Activated CD4-positive, alpha-beta memory T cell treated with anti-CD3 and anti-CD28 coated beads for 36 hours (primary cell): ENCODE measurements at regions of chr1 and their contacts with region 1.

Region 1: GRCh38 chr1:109643385-109644230 is 12.3 kb upstream of the GSTM4 start:
- DNase-seq: peak; percentile 93
- H3K4me3 Mint-ChIP-seq: no peak overlapping the region
- H3K27ac Mint-ChIP-seq: no peak overlapping the region
- H3K4me1 Mint-ChIP-seq: peaks cover 3% of the 10 kb centered on the region
- H3K27me3 Mint-ChIP-seq: no peaks in the 10 kb centered on the region

Region 2: DNA sequence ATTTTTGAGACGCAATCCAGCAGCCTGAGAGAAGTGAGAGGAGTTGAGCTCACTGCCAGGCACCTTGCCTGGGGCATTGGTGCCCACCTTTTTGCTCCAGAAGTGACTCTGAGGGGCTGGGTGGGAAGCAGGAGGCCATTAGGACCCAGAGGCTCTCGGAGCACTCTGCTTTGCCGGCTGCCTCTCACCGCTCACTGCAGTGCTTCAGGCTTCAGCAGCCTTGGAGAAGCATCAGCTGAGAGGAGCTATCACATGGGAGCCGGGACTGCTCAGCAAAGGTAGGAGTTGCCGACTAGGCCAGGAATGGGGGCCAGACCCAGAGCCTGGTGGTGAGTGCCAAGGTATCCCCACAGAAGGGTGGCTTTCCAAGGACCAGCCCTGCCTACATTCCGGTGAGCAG is 103.9 kb before region 1 on chr1 and contains the start of gene GPR61:
- CTCF ChIA-PET with region 1: interaction called, 130 read pairs
- POLR2A ChIA-PET with region 1: no interaction called
- intact Hi-C with region 1: no loop called
- DNase-seq: no peak
- H3K4me3 Mint-ChIP-seq: no peak within 1 kb of the TSS
- H3K27ac Mint-ChIP-seq: no peak within 1 kb of the TSS
- H3K4me1 Mint-ChIP-seq: no peaks in the 10 kb centered on the region
- H3K27me3 Mint-ChIP-seq: no peaks in the 10 kb centered on the region
- total RNA-seq, gene GPR61: 0.15 TPM in 1 of 2 experiments, not detected in the other

Region 3: DNA sequence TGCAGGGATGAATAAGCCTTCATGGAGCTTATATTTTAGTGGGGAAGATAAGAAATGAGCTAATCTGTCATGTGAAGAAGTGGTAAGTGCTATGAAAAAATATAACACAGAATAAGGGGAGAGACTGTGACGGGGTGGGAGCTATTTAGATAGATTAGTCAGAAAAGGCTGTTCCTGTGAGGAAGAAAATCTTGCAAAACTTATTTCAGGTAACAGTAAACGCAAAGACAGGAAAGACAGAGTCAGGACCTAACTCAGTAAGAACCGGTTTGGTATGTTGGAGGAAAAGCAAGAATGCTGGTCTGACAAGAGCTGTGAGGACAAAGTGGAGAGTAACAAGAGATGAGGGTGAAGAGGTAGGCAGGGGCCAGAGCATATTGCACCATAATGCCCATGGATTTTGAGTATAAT is 73.2 kb before region 1 on chr1:
- CTCF ChIA-PET with region 1: interaction called, 12 read pairs
- POLR2A ChIA-PET with region 1: no interaction called
- intact Hi-C with region 1: no loop called
- DNase-seq: no peak
- H3K4me3 Mint-ChIP-seq: no peak overlapping the region
- H3K27ac Mint-ChIP-seq: no peak overlapping the region
- H3K4me1 Mint-ChIP-seq: peaks cover 34% of the 10 kb centered on the region
- H3K27me3 Mint-ChIP-seq: no peaks in the 10 kb centered on the region

Region 4: DNA sequence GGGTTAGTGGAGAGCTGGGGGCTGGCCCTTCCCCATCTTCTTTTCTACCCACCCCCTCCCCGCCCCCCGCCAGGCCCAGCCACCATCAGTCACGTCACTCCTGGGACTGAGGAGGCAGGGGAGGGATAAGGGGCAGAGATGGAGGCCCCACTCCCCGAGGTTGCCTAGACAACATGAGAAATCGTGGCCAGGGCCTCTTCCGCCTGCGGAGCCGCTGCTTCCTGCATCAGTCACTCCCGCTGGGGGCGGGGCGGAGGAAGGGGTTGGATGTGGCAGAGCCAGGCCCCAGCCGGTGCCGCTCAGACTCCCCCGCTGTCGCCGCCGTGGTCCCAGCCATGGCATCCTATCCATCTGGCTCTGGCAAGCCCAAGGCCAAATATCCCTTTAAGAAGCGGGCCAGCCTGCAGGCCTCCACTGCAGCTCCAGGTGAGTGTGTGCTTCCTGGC is 22.7 kb before region 1 on chr1:
- CTCF ChIA-PET with region 1: interaction called, 29 read pairs
- POLR2A ChIA-PET with region 1: no interaction called
- intact Hi-C with region 1: no loop called
- DNase-seq: peak; percentile 98
- H3K4me3 Mint-ChIP-seq: peak overlapping the region; percentile 98
- H3K27ac Mint-ChIP-seq: peak overlapping the region; percentile 96
- H3K4me1 Mint-ChIP-seq: peaks cover 58% of the 10 kb centered on the region
- H3K27me3 Mint-ChIP-seq: no peaks in the 10 kb centered on the region

Region 5: DNA sequence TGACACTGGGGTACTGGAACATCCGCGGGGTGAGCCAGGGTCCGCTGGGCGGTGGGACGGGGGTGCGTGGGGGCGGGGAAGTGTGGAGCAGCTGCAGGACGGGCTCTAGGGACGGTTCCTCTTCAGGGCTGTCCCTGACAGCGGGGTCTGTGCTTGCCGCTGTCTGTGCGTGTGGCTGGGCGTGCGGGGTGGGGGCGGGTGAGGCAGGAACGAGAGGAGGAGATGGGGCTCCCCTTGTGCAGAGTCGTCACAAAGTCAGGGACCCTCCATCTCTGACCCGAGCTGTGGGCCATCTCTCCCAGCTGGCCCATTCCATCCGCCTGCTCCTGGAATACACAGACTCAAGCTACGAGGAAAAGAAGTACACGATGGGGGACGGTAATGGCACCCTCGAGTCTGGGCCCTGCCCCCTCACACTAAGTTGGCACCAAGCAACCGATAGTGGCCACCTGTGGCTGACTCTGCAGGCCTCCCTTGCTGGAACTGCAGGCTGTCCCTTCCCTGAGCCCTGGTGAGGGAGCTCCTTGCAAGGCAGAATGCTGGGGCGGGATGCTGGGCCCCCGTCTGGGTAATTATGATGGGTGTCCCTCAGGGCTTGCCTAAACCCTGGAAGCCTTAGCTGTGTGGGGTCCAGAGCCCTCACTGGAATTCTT is 24.6 kb after region 1 on chr1:
- CTCF ChIA-PET with region 1: interaction called, 16 read pairs
- POLR2A ChIA-PET with region 1: no interaction called
- intact Hi-C with region 1: no loop called
- DNase-seq: no peak
- H3K4me3 Mint-ChIP-seq: peak overlapping the region; percentile 64
- H3K27ac Mint-ChIP-seq: no peak overlapping the region
- H3K4me1 Mint-ChIP-seq: peaks cover 13% of the 10 kb centered on the region
- H3K27me3 Mint-ChIP-seq: no peaks in the 10 kb centered on the region

Region 6: GRCh38 chr1:109751531-109752260 is 108.1 kb after region 1 on chr1:
- CTCF ChIA-PET with region 1: interaction called, 14 read pairs
- POLR2A ChIA-PET with region 1: no interaction called
- intact Hi-C with region 1: no loop called
- DNase-seq: no peak
- H3K4me3 Mint-ChIP-seq: no peak overlapping the region
- H3K27ac Mint-ChIP-seq: no peak overlapping the region
- H3K4me1 Mint-ChIP-seq: no peaks in the 10 kb centered on the region
- H3K27me3 Mint-ChIP-seq: peaks cover 20% of the 10 kb centered on the region